SK-N-SH (cell line): ENCODE measurements at regions of chr1 and their contacts with region 1.

Region 1: DNA sequence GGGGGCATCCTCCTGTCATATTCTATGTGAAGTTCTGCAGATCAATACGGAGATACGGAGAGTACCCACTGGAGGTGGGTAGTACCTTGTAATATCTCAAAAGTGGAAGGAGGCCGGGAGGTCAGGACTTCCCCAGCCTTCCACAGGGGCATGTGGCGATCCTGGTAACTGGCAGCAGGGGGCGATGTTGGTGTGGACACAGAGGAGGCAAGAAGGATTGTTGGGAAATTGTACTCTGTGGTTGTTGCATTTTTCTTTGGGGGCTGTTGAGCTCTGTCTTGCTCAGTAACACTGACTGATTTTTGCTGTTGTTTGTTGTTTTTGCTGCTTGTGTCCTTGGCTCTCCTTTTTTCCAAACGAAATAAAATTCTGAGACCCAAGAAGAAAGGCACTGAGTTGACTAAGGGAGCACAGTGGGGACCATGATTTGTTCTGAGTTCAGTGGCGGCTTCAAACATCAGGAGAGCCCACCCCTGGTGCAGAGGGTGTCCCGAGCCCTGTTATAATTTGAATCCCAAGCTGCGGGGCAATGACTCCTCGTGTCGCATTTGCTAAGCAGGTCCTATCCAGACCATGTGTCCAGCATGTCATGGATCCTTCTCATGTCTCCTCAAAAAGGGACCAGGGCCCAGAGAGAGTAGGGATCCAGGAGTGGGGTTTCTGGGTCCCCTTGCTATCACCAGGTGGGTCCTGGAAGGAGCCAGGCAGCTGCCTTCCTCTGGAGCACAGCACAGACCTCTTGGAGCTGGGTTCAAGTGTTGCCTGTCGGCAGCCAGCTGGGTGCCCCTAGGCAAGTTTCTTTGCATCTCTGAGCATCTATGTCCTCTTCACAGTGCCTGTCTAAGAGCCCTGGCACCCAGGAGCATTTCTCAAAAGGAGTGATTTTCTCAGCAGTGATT is 22.8 kb downstream of the LHX4 start:
- DNase-seq: peak; percentile 81
- H3K4me3 ChIP-seq: no peak overlapping the region; a peak in 1 of 4 replicates
- H3K27ac ChIP-seq: no peak overlapping the region
- H3K4me1 ChIP-seq: peaks cover 0 to 1% of the 10 kb centered on the region in 2 experiments; a peak in 1 of 4 replicates
- H3K27me3 ChIP-seq: no peaks in the 10 kb centered on the region
- CTCF ChIP-seq: peak; percentile 82
- EP300 ChIP-seq: no peak
- RAD21 ChIP-seq: peak; percentile 90

Region 2: DNA sequence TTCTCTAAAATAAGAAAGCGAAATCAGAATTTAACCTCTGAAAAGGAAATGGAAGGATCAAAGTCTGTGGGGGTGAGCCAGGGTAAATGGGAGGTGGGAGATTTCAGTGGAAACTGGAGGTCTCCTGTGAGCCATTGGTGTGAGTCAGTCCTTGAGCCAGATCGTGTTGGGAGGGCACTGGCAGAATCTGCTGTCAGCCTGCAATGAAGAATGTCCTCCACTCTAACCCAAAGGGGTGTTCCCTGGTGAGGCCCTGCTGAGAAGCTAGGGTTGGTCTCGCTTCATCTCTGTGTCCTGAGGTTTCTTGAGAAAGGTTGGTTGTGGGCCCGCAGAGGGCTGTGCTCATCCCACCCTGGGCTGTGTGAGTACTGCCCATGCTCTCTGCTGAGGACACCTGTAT is 95.8 kb before region 1 on chr1:
- CTCF ChIA-PET with region 1: no interaction called
- POLR2A ChIA-PET with region 1: no interaction called
- DNase-seq: no peak
- H3K4me3 ChIP-seq: peak overlapping the region in 1 of 2 experiments; percentile 82; a peak in 2 of 4 replicates
- H3K27ac ChIP-seq: peak overlapping the region in 1 of 2 experiments; percentile 72; a peak in 2 of 4 replicates
- H3K4me1 ChIP-seq: peaks cover 10 to 24% of the 10 kb centered on the region in 2 experiments
- H3K27me3 ChIP-seq: no peaks in the 10 kb centered on the region
- CTCF ChIP-seq: no peak
- EP300 ChIP-seq: no peak
- RAD21 ChIP-seq: no peak

Region 3: DNA sequence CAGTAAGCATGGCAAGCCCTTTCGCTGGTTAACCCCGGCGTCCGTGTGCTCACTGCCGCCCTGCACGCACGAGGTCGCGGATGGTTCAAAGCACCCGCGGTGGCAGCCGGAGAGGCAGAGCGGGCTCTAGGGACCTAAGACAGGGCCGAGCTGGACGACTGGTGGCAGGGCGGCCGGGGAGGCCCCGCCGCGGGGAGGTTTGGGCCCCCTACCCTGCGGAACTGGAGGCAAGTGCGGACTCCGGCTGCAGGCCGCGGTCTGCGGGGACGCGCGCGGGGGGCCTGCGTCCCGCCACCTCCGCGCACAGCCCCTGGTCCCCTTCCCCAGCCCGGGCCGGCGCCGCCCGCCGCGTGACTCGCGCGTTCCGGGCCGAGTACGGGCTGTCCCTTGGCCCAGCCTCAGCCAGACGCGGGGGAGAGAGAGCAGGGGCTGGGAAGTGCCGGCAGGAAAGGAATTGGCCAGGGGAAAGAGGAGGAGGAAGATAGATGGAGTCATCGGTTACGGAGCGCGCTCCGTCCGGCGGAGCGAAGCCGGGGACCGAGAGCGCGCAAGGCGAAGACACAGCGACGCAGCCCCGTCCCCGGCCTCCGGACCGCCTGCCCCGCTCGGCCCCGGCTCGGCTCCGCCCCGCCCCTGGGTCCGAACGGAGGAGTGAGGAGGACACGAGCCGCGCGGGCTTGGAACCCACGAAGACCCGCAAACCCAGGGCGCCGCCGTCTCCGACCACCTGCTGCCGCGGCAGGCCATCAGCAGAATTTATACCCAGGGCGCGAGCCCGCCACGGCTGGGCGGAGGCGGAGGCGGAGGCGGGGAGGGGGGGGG is 23.5 kb before region 1 on chr1:
- CTCF ChIA-PET with region 1: interaction called, 14 read pairs
- POLR2A ChIA-PET with region 1: no interaction called
- DNase-seq: peak; percentile 89
- H3K4me3 ChIP-seq: peak overlapping the region; percentile 50 to 56
- H3K27ac ChIP-seq: no peak overlapping the region
- H3K4me1 ChIP-seq: peaks cover 0 to 19% of the 10 kb centered on the region in 2 experiments; a peak in 1 of 4 replicates
- H3K27me3 ChIP-seq: peaks cover 87% of the 10 kb centered on the region
- CTCF ChIP-seq: no peak
- EP300 ChIP-seq: no peak
- RAD21 ChIP-seq: no peak

Region 4: GRCh38 chr1:180234369-180235076 is 18.4 kb before region 1 on chr1:
- CTCF ChIA-PET with region 1: interaction called, 16 read pairs
- POLR2A ChIA-PET with region 1: no interaction called
- DNase-seq: peak; percentile 63
- H3K4me3 ChIP-seq: 0 out of 4 replicates have a peak overlapping the region, but pooled peaks of 1 of the 2 experiments have one; percentile 23
- H3K27ac ChIP-seq: no peak overlapping the region
- H3K4me1 ChIP-seq: peaks cover 0 to 17% of the 10 kb centered on the region in 2 experiments; a peak in 1 of 4 replicates
- H3K27me3 ChIP-seq: peaks cover 94% of the 10 kb centered on the region
- CTCF ChIP-seq: no peak
- EP300 ChIP-seq: no peak
- RAD21 ChIP-seq: no peak

Region 5: GRCh38 chr1:180415985-180416633 is 163.2 kb after region 1 on chr1:
- CTCF ChIA-PET with region 1: interaction called, 58 read pairs
- POLR2A ChIA-PET with region 1: no interaction called
- DNase-seq: peak; percentile 51
- H3K4me3 ChIP-seq: no peak overlapping the region; a peak in 1 of 4 replicates
- H3K27ac ChIP-seq: no peak overlapping the region
- H3K4me1 ChIP-seq: no peaks in the 10 kb centered on the region
- H3K27me3 ChIP-seq: no peaks in the 10 kb centered on the region
- CTCF ChIP-seq: peak; percentile 71
- EP300 ChIP-seq: no peak
- RAD21 ChIP-seq: peak; percentile 80

Region 6: DNA sequence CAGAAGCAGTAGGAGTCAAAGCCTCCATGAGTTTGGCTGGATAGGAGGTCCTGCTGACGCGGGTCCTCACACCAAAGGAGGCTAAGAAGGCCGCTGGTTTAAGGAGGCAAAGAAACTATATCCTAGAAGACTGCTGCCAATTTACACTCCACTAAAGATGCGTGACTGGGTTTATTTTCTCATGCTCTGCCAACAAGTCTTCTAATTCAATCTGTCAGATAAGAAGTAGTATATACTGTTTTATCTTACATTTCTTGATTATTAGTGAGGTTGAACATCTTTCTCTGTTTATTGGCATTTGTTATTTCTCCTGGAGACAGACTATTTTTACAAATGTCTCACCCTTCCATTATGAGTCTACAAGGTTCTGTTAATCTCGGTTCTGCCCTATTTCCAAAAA is 215.4 kb after region 1 on chr1:
- CTCF ChIA-PET with region 1: interaction called, 10 read pairs
- POLR2A ChIA-PET with region 1: no interaction called
- DNase-seq: no peak
- H3K4me3 ChIP-seq: no peak overlapping the region
- H3K27ac ChIP-seq: no peak overlapping the region
- H3K4me1 ChIP-seq: no peaks in the 10 kb centered on the region
- H3K27me3 ChIP-seq: no peaks in the 10 kb centered on the region
- CTCF ChIP-seq: no peak
- EP300 ChIP-seq: no peak
- RAD21 ChIP-seq: no peak

Region 7: GRCh38 chr1:180482425-180483275 is 229.8 kb after region 1 on chr1:
- CTCF ChIA-PET with region 1: interaction called, 39 read pairs
- POLR2A ChIA-PET with region 1: no interaction called
- DNase-seq: peak; percentile 37
- H3K4me3 ChIP-seq: peak overlapping the region; percentile 7 to 12; a peak in 2 of 4 replicates
- H3K27ac ChIP-seq: no peak overlapping the region
- H3K4me1 ChIP-seq: no peaks in the 10 kb centered on the region; a peak in 1 of 4 replicates
- H3K27me3 ChIP-seq: no peaks in the 10 kb centered on the region
- CTCF ChIP-seq: peak; percentile 86
- EP300 ChIP-seq: no peak
- RAD21 ChIP-seq: peak; percentile 62